RWPE1 (cell line): ENCODE measurements at regions of chr1 and their contacts with region 1.

Region 1: DNA sequence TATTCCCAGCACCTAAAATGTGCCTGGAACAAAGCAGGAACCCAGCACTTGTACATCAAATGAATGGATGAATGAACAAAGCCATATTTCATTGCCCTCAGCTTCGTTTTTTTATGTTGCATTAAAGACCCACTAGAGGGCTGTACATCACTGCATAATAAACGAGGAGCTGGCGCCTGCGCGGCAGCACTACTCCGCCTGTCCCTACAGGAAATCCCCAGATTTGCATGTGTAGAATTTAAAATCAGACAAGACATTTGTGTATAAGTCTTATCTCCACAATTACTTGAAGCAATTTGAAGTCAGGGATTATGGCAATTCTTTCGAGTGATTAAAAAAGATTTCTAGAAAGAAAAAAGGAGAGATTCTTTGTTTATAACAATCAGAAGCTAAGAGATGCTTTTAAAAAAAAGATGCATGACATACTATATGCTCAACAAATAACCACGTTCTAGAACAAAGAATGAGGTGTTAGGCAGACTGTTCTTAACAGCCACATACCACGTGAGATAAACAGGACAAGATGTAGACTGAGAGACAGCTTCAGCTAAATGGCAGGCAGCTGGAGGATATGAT is 5.4 kb upstream of the NEK2 start:
- DNase-seq: peak; percentile 84
- H3K27ac ChIP-seq: no peak overlapping the region
- CTCF ChIP-seq: peak; percentile 80

Region 2: GRCh38 chr1:211944733-211945500 is 264.1 kb after region 1 on chr1:
- CTCF ChIA-PET with region 1: interaction called, 14 read pairs
- POLR2A ChIA-PET with region 1: no interaction called
- DNase-seq: peak; percentile 95
- H3K27ac ChIP-seq: peak overlapping the region; percentile 61
- CTCF ChIP-seq: peak; percentile 95

Region 3: GRCh38 chr1:212035123-212035834 is 354.4 kb after region 1 on chr1 and contains the starts of genes DTL and INTS7:
- CTCF ChIA-PET with region 1: interaction called, 15 read pairs
- POLR2A ChIA-PET with region 1: interaction called, 3 read pairs
- DNase-seq: peak; percentile 100
- H3K27ac ChIP-seq: peak within 1 kb of the TSS; percentile 92
- CTCF ChIP-seq: peak; percentile 95